ENCODE measurements at regions of chr15 and their contacts with region 1.

Region 1: GRCh38 chr15:99928429-99928981 is 195.3 kb upstream of the LYSMD4 start:
- DNase-seq: peak; percentile 81 to 91
- ATAC-seq: peak; percentile 79 to 96 (median 94)
- H3K4me3 ChIP-seq: peak overlapping the region in 9 of 10 donors; percentile 21 to 58 (median 48)
- H3K27ac ChIP-seq: peak overlapping the region in 9 of 10 donors; percentile 31 to 80 (median 68)
- H3K4me1 ChIP-seq: peaks cover 2 to 15% (median 10%) of the 10 kb centered on the region in 9 donors
- H3K27me3 ChIP-seq: no peaks in the 10 kb centered on the region
- CTCF ChIP-seq: peak; percentile 65 to 80 (median 72)

Region 2: GRCh38 chr15:99976811-99977271 is 48.3 kb after region 1 on chr15:
- intact Hi-C with region 1: no loop called
- DNase-seq: no peak
- ATAC-seq: no peak
- H3K4me3 ChIP-seq: no peak overlapping the region
- H3K27ac ChIP-seq: no peak overlapping the region
- H3K4me1 ChIP-seq: peaks cover 0 to 11% (median 0%) of the 10 kb centered on the region in 9 donors
- H3K27me3 ChIP-seq: no peaks in the 10 kb centered on the region
- CTCF ChIP-seq: no peak

Region 3: DNA sequence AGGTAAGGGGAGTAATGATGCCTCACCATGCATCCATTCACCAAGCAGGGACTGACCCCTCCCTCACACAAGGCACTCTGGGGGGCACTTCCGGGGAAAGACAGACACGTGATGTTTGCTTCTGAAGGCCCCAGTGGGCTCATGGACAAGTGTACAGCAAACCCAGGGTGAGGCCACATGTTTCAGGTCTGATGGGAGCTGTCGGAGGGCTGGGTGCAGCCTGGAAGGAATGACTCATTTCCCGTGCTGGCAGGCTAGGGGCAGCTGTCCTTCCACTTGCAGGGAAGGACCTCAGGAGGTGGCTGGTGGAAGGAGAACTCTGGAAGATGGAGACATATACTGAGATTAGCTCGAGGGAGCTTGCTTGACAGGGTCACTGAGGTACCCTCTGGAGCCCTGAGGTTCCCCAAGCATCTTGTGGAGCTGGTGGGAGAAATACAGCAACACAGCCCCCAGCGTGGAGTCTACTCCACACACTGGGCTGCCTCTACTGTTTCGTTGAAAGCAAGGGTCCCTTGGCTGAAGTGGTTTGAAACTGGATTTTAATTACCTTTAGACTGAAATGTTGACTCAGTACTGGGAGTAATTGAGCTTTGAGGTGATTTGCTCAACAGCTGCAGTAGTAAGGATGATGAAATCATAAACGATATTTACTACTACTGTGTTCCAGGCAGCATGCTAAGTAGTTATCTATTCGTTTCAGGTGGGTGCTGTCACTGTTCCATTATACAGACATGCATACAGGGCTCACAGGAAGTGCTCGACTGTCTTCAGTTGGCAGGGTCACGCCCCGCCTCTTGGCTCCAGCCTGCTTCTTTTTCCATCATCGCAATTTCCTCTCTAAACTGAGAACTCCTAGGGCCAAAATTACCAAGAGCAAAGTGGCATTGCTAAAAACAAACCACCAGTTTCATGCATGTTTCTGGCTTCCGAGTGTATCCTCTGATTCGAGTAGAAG is 182.9 kb after region 1 on chr15:
- intact Hi-C with region 1: loop called in 1 of 10 experiments (anchors 2 kb)
- DNase-seq: peak; percentile 69 to 74
- ATAC-seq: peak; percentile 20 to 81 (median 62)
- H3K4me3 ChIP-seq: no peak overlapping the region
- H3K27ac ChIP-seq: peak overlapping the region; percentile 58 to 99 (median 96)
- H3K4me1 ChIP-seq: peaks cover 36 to 64% (median 59%) of the 10 kb centered on the region in 9 donors
- H3K27me3 ChIP-seq: no peaks in the 10 kb centered on the region
- CTCF ChIP-seq: peak in 2 of 9 donors; percentile 15 to 17

Region 4: GRCh38 chr15:100131321-100132224 is 203.1 kb after region 1 on chr15:
- intact Hi-C with region 1: loop called in 4 of 10 experiments (anchors 2 to 10 kb)
- DNase-seq: peak; percentile 69 to 77
- ATAC-seq: peak; percentile 87 to 97 (median 91)
- H3K4me3 ChIP-seq: peak overlapping the region in 9 of 10 donors; percentile 15 to 47 (median 26)
- H3K27ac ChIP-seq: peak overlapping the region in 8 of 10 donors; percentile 9 to 55 (median 45)
- H3K4me1 ChIP-seq: peaks cover 0 to 11% (median 0%) of the 10 kb centered on the region in 9 donors
- H3K27me3 ChIP-seq: no peaks in the 10 kb centered on the region
- CTCF ChIP-seq: peak; percentile 27 to 76 (median 61)

Region 5: DNA sequence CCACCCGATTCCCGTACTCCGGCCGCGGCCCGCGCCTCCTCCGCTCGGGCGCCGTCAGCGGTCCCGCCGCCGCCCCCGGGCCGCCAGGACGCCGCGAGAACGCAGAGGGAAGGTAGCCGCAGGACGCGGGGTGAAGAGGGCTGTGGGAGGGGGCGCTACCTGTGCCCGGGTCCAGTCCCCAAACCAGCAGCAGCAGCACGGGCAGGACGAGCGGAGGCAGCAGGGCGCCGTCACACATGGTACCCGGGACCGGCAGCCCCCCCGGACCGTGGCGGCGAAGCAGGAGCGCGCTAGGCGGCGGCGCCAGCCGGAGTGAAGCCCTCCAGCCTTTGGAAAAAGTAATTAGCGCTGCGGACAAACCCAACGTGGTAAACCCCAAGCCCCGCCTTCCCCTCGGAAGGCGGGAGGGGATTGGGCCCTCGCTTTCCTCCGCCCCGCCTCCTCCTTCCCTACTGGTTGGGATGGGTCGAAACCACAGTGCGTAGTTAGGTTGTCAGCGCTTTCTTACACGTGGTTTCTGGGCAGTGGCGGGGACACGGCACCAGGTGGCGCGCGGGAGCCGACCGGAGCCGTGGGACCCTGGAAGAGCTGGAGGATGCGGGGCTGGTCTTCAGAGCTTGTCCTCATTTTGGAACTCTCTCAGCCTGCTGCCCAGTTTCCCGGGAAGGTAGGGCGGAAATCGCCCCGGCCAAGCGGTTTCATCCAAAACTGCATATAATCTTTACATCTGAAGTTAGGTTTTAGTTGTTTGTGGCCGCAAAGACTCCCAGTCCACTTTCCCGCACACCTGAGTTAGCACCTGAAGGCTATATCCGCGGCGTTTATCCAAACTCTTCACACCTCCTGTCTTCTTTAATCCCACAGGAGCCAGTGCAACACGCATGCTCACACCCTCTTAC is 413.4 kb after region 1 on chr15 and contains the start of gene ADAMTS17:
- intact Hi-C with region 1: loop called (anchors 2 to 10 kb)
- DNase-seq: peak; percentile 94 to 96
- ATAC-seq: peak; percentile 98 to 100 (median 99)
- H3K4me3 ChIP-seq: peak within 1 kb of the TSS; percentile 55 to 86 (median 72)
- H3K27ac ChIP-seq: peak within 1 kb of the TSS in 7 of 10 donors; percentile 39 to 78 (median 45)
- H3K4me1 ChIP-seq: peaks cover 0 to 14% (median 7%) of the 10 kb centered on the region in 9 donors
- H3K27me3 ChIP-seq: peaks cover 0 to 45% (median 13%) of the 10 kb centered on the region in 7 donors
- CTCF ChIP-seq: peak; percentile 83 to 98 (median 95)
- total RNA-seq, gene ADAMTS17: 0.47 to 5.0 (median 1.3) TPM

Region 6: DNA sequence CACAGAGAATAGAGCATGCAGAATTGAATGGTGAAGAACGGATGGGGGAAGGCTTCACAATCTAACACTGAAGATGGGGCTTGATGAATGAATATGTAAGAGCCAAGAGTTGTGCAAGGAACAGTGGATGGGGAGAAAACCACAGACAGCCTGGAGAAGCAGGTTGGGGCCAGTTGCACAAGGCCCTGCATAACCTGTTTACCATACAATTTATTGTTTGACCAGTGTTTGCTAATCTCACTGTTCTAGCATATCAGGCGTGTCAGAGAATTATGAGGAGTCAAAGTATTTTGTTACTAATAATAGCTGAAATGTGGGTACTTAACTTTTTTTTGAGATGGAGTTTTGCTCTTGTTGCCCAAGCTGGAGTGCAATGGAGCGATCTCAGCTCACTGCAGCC is 637.1 kb after region 1 on chr15:
- intact Hi-C with region 1: loop called in 1 of 10 experiments (anchors 10 kb)
- DNase-seq: no peak
- ATAC-seq: no peak
- H3K4me3 ChIP-seq: no peak overlapping the region
- H3K27ac ChIP-seq: no peak overlapping the region
- H3K4me1 ChIP-seq: peaks cover 0 to 5% (median 0%) of the 10 kb centered on the region in 9 donors
- H3K27me3 ChIP-seq: no peaks in the 10 kb centered on the region
- CTCF ChIP-seq: no peak

Region 7: GRCh38 chr15:100602064-100602822 is 673.7 kb after region 1 on chr15 and contains the starts of genes ASB7 and LINS1:
- intact Hi-C with region 1: loop called in 1 of 10 experiments (anchors 10 kb)
- DNase-seq: peak; percentile 100
- ATAC-seq: peak; percentile 97 to 99 (median 99)
- H3K4me3 ChIP-seq: peak within 1 kb of the TSS; percentile 63 to 100 (median 84)
- H3K27ac ChIP-seq: peak within 1 kb of the TSS; percentile 2 to 92 (median 88)
- H3K4me1 ChIP-seq: peaks cover 3 to 47% (median 37%) of the 10 kb centered on the region in 9 donors
- H3K27me3 ChIP-seq: no peaks in the 10 kb centered on the region
- CTCF ChIP-seq: peak in 1 of 9 donors; percentile 10
- total RNA-seq, gene ASB7: 4.4 to 7.0 (median 6.1) TPM
- total RNA-seq, gene LINS1: 5.4 to 12.2 (median 7.3) TPM

Measured in heart right ventricle (tissue), 16 donors.